ENCODE measurements at regions of chr20 and their contacts with region 1.

Region 1: GRCh38 chr20:51480507-51481270 is 61.8 kb downstream of the NFATC2 start:
- DNase-seq: peak; percentile 91
- H3K4me3 Mint-ChIP-seq: peak overlapping the region; percentile 58
- H3K27ac Mint-ChIP-seq: peak overlapping the region; percentile 97
- H3K4me1 Mint-ChIP-seq: peaks cover 84% of the 10 kb centered on the region
- H3K27me3 Mint-ChIP-seq: no peaks in the 10 kb centered on the region

Region 2: GRCh38 chr20:51062065-51062464 is 418.6 kb before region 1 on chr20:
- CTCF ChIA-PET with region 1: no interaction called
- intact Hi-C with region 1: loop called (anchors 1 kb)
- DNase-seq: peak; percentile 83
- H3K4me3 Mint-ChIP-seq: no peak overlapping the region
- H3K27ac Mint-ChIP-seq: peak overlapping the region; percentile 79
- H3K4me1 Mint-ChIP-seq: peaks cover 44% of the 10 kb centered on the region
- H3K27me3 Mint-ChIP-seq: peaks cover 32% of the 10 kb centered on the region

Region 3: GRCh38 chr20:51404298-51405060 is 76.2 kb before region 1 on chr20:
- CTCF ChIA-PET with region 1: interaction called, 4 read pairs
- intact Hi-C with region 1: loop called (anchors 1 kb)
- DNase-seq: peak; percentile 87
- H3K4me3 Mint-ChIP-seq: no peak overlapping the region
- H3K27ac Mint-ChIP-seq: peak overlapping the region; percentile 93
- H3K4me1 Mint-ChIP-seq: peaks cover 64% of the 10 kb centered on the region
- H3K27me3 Mint-ChIP-seq: no peaks in the 10 kb centered on the region

Region 4: GRCh38 chr20:51469578-51470498 is 10.9 kb before region 1 on chr20:
- CTCF ChIA-PET with region 1: no interaction called
- intact Hi-C with region 1: loop called (anchors 1 kb)
- DNase-seq: no peak
- H3K4me3 Mint-ChIP-seq: no peak overlapping the region
- H3K27ac Mint-ChIP-seq: no peak overlapping the region
- H3K4me1 Mint-ChIP-seq: peaks cover 32% of the 10 kb centered on the region
- H3K27me3 Mint-ChIP-seq: no peaks in the 10 kb centered on the region

Region 5: GRCh38 chr20:51500311-51500710 is 19.6 kb after region 1 on chr20:
- CTCF ChIA-PET with region 1: interaction called, 9 read pairs
- intact Hi-C with region 1: loop called (anchors 1 kb)
- DNase-seq: peak; percentile 70
- H3K4me3 Mint-ChIP-seq: no peak overlapping the region
- H3K27ac Mint-ChIP-seq: peak overlapping the region; percentile 87
- H3K4me1 Mint-ChIP-seq: peaks cover 68% of the 10 kb centered on the region
- H3K27me3 Mint-ChIP-seq: no peaks in the 10 kb centered on the region

Region 6: GRCh38 chr20:51541189-51542032 is 60.7 kb after region 1 on chr20:
- CTCF ChIA-PET with region 1: interaction called, 12 read pairs
- intact Hi-C with region 1: loop called (anchors 1 kb)
- DNase-seq: peak; percentile 91
- H3K4me3 Mint-ChIP-seq: peak overlapping the region; percentile 96
- H3K27ac Mint-ChIP-seq: peak overlapping the region; percentile 98
- H3K4me1 Mint-ChIP-seq: peaks cover 42% of the 10 kb centered on the region
- H3K27me3 Mint-ChIP-seq: no peaks in the 10 kb centered on the region

Region 7: GRCh38 chr20:51624157-51624731 is 143.6 kb after region 1 on chr20:
- CTCF ChIA-PET with region 1: no interaction called
- intact Hi-C with region 1: no loop called
- DNase-seq: peak; percentile 82
- H3K4me3 Mint-ChIP-seq: no peak overlapping the region
- H3K27ac Mint-ChIP-seq: no peak overlapping the region
- H3K4me1 Mint-ChIP-seq: peaks cover 5% of the 10 kb centered on the region
- H3K27me3 Mint-ChIP-seq: no peaks in the 10 kb centered on the region

Region 8: DNA sequence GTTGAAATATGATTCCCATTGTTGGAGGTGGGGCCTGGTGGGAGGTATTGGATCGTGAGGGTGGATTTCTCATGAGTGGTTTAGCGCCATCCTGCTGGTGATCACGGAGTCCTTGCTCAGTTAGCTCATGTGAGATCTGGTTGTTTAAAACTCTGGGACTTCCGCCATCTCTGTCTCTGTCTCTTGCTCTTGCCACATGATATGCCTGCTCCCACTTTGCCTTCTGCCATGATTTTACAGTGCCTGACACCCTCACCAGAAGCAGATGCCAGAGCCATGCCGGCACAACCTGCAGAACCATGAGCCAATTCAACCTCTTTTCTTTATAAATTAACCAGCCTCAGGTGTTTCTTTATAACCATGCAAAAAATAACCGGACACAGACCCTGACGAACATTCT is 755.6 kb after region 1 on chr20:
- CTCF ChIA-PET with region 1: no interaction called
- intact Hi-C with region 1: no loop called
- DNase-seq: no peak
- H3K4me3 Mint-ChIP-seq: no peak overlapping the region
- H3K27ac Mint-ChIP-seq: no peak overlapping the region
- H3K4me1 Mint-ChIP-seq: no peaks in the 10 kb centered on the region
- H3K27me3 Mint-ChIP-seq: no peaks in the 10 kb centered on the region

Measured in activated naive CD4-positive, alpha-beta T cell treated with anti-CD3 and anti-CD28 coated beads for 36 hours (primary cell).